ENCODE measurements at regions of chr2 and their contacts with region 1.

Region 1: GRCh38 chr2:236089271-236090026 is 78.7 kb downstream of the GBX2 start:
- DNase-seq: peak; percentile 22
- H3K4me3 ChIP-seq: no peak overlapping the region
- H3K27ac ChIP-seq: no peak overlapping the region
- H3K4me1 ChIP-seq: peaks cover 47% of the 10 kb centered on the region
- H3K27me3 ChIP-seq: no peaks in the 10 kb centered on the region
- CTCF ChIP-seq: no peak

Region 2: DNA sequence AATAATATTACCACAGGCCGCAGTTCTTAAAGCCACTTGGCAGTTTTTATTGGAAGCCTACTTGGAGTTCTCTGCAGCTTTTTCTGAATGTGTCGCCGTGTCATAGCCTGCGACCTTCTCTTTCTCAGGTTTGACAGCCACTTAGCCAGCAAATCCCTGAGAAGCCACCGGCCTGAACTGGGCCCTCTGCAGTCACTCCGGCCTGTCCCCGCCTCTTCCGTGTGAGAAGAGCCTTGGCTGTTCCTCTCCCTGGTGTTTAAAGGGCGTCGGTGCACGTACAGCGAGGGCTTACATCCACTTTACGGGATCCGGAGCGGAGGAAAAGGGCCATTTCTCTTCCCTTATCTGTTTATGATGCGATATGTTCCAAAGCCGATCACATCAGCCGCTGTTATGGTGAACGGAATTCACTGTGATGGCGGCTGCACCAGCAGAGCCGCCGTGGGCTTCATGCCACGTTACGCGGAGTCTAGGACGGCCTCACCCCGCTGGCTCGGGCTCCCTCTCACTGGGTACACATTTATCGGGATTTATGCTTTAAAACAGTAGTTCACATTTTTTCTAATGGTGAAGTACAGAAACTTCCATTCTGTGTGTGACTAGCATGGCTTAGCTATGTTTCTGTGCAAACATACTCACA is 12.0 kb after region 1 on chr2:
- CTCF ChIA-PET with region 1: interaction called, 12 read pairs
- POLR2A ChIA-PET with region 1: no interaction called
- intact Hi-C with region 1: no loop called
- DNase-seq: no peak
- H3K4me3 ChIP-seq: no peak overlapping the region
- H3K27ac ChIP-seq: no peak overlapping the region
- H3K4me1 ChIP-seq: no peaks in the 10 kb centered on the region
- H3K27me3 ChIP-seq: no peaks in the 10 kb centered on the region
- CTCF ChIP-seq: no peak

Region 3: GRCh38 chr2:236158969-236159777 is 69.7 kb after region 1 on chr2:
- CTCF ChIA-PET with region 1: no interaction called
- POLR2A ChIA-PET with region 1: no interaction called
- intact Hi-C with region 1: loop called (anchors 5 kb)
- DNase-seq: no peak
- H3K4me3 ChIP-seq: no peak overlapping the region
- H3K27ac ChIP-seq: no peak overlapping the region
- H3K4me1 ChIP-seq: no peaks in the 10 kb centered on the region
- H3K27me3 ChIP-seq: peaks cover 19% of the 10 kb centered on the region
- CTCF ChIP-seq: no peak

Region 4: DNA sequence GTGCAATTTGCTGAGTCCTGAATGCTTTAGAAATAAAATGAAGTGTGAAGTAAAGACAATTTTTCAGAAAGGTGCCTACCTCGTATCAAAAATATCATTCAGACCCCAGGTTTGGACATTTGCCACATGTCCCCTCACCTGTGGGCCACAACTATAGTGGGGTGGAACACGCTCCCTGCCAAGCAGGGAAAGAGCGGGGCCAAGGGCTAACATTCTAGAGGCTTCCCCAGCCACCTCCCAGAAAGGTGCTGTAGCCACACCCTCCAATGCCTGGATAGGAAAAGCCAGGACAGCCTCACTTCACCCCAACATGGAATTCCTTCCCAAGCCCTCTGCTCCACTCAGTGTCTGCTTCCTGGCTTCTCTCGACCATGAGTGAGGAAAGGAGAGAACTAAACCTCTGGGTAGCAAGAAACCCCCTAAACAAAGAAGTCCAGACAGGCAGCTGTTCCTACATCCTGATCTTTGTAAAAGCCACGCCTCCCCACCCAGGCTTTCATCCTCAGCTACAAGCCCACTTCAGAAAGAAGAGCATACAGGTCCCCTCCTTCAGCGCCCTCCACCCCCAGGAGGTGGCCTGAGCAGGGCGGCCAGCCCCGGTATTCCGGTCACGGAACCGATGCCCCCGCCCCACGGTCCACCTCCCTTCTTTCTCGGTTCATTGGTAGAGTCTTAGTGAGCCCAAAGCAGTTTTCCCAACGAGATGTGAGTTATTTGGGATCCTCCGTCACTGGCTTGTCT is 1322.4 kb after region 1 on chr2:
- CTCF ChIA-PET with region 1: no interaction called
- POLR2A ChIA-PET with region 1: no interaction called
- intact Hi-C with region 1: no loop called
- DNase-seq: no peak
- H3K4me3 ChIP-seq: no peak overlapping the region
- H3K27ac ChIP-seq: no peak overlapping the region
- H3K4me1 ChIP-seq: no peaks in the 10 kb centered on the region
- H3K27me3 ChIP-seq: peaks cover 31% of the 10 kb centered on the region
- CTCF ChIP-seq: no peak

Measured in A673 (cell line).